Mammary epithelial cell (primary cell): ENCODE measurements at regions of chr6 and their contacts with region 1.

Region 1: GRCh38 chr6:19368509-19368908 is 468.7 kb upstream of the ID4 start:
- DNase-seq: peak; percentile 67
- H3K4me3 ChIP-seq: no peak overlapping the region
- H3K27ac ChIP-seq: no peak overlapping the region
- H3K4me1 ChIP-seq: no peaks in the 10 kb centered on the region
- H3K27me3 ChIP-seq: no peaks in the 10 kb centered on the region
- CTCF ChIP-seq: peak in 1 of 2 donors; percentile 48

Region 2: GRCh38 chr6:19270616-19271015 is 97.9 kb before region 1 on chr6:
- CTCF ChIA-PET with region 1: no interaction called
- dilution Hi-C with region 1: loop called (anchors 5 kb)
- in situ Hi-C with region 1: no loop called
- intact Hi-C with region 1: no loop called
- DNase-seq: no peak
- H3K4me3 ChIP-seq: no peak overlapping the region
- H3K27ac ChIP-seq: no peak overlapping the region
- H3K4me1 ChIP-seq: no peaks in the 10 kb centered on the region
- H3K27me3 ChIP-seq: no peaks in the 10 kb centered on the region
- CTCF ChIP-seq: no peak

Region 3: GRCh38 chr6:19312241-19312978 is 56.1 kb before region 1 on chr6:
- CTCF ChIA-PET with region 1: no interaction called
- dilution Hi-C with region 1: no loop called
- in situ Hi-C with region 1: no loop called
- intact Hi-C with region 1: no loop called
- DNase-seq: no peak
- H3K4me3 ChIP-seq: no peak overlapping the region
- H3K27ac ChIP-seq: no peak overlapping the region
- H3K4me1 ChIP-seq: no peaks in the 10 kb centered on the region
- H3K27me3 ChIP-seq: no peaks in the 10 kb centered on the region
- CTCF ChIP-seq: no peak

Region 4: GRCh38 chr6:19632786-19633185 is 264.3 kb after region 1 on chr6:
- CTCF ChIA-PET with region 1: no interaction called
- dilution Hi-C with region 1: no loop called
- in situ Hi-C with region 1: no loop called
- intact Hi-C with region 1: loop called (anchors 10 kb)
- DNase-seq: no peak
- H3K4me3 ChIP-seq: no peak overlapping the region
- H3K27ac ChIP-seq: no peak overlapping the region
- H3K4me1 ChIP-seq: no peaks in the 10 kb centered on the region
- H3K27me3 ChIP-seq: no peaks in the 10 kb centered on the region
- CTCF ChIP-seq: no peak

Region 5: DNA sequence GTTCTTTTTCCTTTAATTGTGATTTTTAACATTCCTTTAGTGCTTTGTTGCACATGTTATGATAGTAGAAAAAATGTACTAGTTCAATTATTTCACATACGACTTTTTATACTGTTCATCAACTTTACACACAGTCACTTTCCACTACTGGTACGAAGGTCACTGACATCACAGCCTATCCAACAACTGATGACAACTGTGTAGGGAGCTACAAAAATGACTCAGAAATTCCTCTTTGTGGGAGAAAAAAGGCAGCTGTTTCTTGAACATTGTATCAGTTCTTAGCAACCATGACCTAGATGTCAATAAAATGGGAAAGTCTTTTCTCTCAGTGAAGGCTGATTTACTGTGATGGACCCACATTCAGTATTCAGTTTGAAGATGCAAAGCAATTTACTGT is 461.7 kb after region 1 on chr6:
- CTCF ChIA-PET with region 1: no interaction called
- dilution Hi-C with region 1: no loop called
- in situ Hi-C with region 1: no loop called
- intact Hi-C with region 1: no loop called
- DNase-seq: no peak
- H3K4me3 ChIP-seq: no peak overlapping the region
- H3K27ac ChIP-seq: no peak overlapping the region
- H3K4me1 ChIP-seq: peaks cover 5% of the 10 kb centered on the region
- H3K27me3 ChIP-seq: peaks cover 4% of the 10 kb centered on the region
- CTCF ChIP-seq: no peak